GM10248 (cell line): ENCODE measurements at regions of chr11 and their contacts with region 1.

Region 1: DNA sequence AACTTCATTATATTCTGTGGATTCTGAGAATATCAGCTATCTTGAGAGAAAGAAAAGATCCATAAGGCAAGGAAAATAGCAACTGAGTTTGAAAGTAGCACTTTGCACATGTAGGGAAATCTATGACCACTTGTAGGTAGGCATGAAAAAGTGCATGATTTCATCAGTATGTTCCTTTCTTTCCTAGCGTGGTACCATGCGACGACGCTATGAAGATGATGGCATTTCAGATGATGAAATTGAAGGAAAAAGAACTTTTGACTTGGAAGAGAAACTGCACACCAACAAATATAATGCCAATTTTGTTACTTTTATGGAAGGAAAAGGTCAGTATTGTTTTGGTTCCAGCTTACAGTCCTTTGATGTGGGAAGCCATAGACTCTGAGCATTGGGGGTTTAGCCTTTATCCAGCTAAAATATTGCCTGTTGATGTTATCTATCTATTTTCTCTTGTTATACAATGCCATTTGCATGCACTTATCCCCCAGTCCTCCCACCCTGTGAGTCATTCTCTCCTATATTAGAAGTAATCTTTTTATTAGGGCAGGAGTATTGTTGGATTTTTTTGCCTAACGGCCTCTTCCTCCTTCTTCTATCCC is 60.9 kb downstream of the KDM2A start:
- DNase-seq: no peak
- CTCF ChIP-seq: no peak

Region 2: GRCh38 chr11:67195971-67196456 is 16.0 kb after region 1 on chr11:
- CTCF ChIA-PET with region 1: interaction called, 11 read pairs
- POLR2A ChIA-PET with region 1: no interaction called
- DNase-seq: no peak
- CTCF ChIP-seq: no peak

Region 3: DNA sequence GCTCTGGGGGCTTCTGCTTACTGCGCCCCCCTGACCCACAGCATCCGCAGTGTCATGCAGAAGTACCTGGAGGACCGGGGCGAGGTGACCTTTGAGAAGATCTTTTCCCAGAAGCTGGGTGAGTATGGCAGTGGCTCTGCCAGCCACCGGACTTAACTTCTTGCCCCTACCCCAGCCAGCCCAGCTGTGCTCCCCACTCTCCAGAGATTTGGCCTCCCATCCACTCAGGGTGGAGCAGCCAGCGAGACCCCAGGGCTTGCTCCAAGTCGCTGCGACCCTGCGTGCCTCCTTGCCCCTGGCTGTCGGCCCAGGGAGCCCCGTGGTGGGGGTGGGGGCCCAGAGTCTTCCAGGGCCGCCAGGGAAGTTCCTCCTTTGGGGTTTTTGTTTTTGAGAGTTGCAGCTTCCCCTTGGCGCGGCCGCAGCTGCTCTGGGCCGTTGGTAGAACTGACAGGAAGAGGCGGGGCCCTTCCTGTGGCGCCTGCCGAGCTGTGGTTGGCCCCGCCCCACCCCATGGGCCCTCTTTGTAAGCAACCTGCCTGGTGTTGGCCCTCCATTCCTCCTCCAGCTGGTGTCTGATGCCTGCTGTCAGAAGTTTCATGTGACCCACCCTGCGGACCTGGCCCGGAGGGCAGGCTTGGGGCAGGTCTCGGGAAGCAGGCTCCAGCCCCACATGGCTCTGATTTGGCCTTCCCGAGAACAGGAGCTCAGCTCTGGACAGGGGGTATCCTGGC is 97.4 kb after region 1 on chr11:
- CTCF ChIA-PET with region 1: no interaction called
- POLR2A ChIA-PET with region 1: no interaction called
- DNase-seq: peak; percentile 93
- CTCF ChIP-seq: no peak

Region 4: GRCh38 chr11:67516806-67517205 is 336.8 kb after region 1 on chr11:
- CTCF ChIA-PET with region 1: no interaction called
- POLR2A ChIA-PET with region 1: no interaction called
- DNase-seq: no peak
- CTCF ChIP-seq: no peak